ENCODE measurements at regions of chr15 and their contacts with region 1.

Region 1: DNA sequence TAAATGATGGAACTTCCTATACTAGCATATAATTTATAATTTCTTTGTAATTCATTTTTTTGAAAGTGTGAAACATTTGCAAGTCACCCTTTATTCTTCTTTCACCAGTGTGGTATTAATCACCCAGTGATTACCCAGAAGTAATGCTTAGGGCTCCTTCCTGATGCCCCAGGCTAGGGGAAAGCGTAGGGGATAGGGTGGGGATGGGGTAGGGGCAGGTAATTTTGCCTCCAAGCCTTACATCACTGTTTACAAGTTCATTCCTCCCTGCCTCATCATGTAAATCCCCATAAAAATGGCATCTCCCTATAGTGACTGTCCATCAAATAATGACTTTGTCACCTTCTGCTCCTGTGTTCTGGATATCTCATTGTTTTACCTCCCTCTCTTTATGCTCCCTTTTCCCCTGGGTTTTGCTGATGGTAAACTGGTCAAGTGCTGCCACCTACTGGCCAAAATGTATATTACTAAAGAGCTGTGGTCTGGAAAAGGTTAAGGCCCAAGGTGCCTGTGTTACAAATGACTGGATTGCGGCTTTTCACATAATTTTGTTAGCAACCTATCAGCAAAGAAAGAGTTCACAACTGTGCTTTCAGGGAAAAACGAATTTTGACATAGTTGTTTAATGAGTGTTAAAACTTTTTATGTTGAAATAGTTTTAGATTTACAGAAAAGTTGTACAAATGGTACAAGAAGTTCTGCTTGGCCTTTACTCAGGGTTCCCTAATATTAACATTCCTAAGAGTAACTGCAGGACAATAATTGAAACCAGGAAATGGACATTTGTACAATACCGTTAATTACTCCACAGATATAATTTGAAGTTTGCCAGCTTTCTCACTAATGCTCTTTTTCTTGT is 54.7 kb downstream of the ONECUT1 start:
- DNase-seq: peak; percentile 70
- H3K4me3 ChIP-seq: no peak overlapping the region
- H3K27ac ChIP-seq: no peak overlapping the region
- H3K4me1 ChIP-seq: peaks cover 0 to 3% (median 1%) of the 10 kb centered on the region in 4 donors
- H3K27me3 ChIP-seq: no peaks in the 10 kb centered on the region
- CTCF ChIP-seq: peak; percentile 78 to 87 (median 81)
- EP300 ChIP-seq: no peak
- POLR2A ChIP-seq: no peak

Region 2: GRCh38 chr15:52246686-52247431 is 488.6 kb before region 1 on chr15:
- in situ Hi-C with region 1: loop called in 3 of 4 experiments (anchors 10 to 25 kb)
- intact Hi-C with region 1: loop called (anchors 5 kb)
- DNase-seq: no peak
- H3K4me3 ChIP-seq: no peak overlapping the region
- H3K27ac ChIP-seq: no peak overlapping the region
- H3K4me1 ChIP-seq: no peaks in the 10 kb centered on the region
- H3K27me3 ChIP-seq: no peaks in the 10 kb centered on the region
- CTCF ChIP-seq: no peak
- EP300 ChIP-seq: no peak
- POLR2A ChIP-seq: no peak

Region 3: GRCh38 chr15:52256366-52256765 is 479.1 kb before region 1 on chr15:
- in situ Hi-C with region 1: loop called in 3 of 4 experiments (anchors 5 to 25 kb)
- intact Hi-C with region 1: loop called (anchors 5 kb)
- DNase-seq: peak; percentile 79
- H3K4me3 ChIP-seq: no peak overlapping the region
- H3K27ac ChIP-seq: peak overlapping the region in 1 of 4 donors; percentile 7
- H3K4me1 ChIP-seq: peaks cover 0 to 15% (median 8%) of the 10 kb centered on the region in 4 donors
- H3K27me3 ChIP-seq: no peaks in the 10 kb centered on the region
- CTCF ChIP-seq: peak; percentile 71 to 89 (median 84)
- EP300 ChIP-seq: no peak
- POLR2A ChIP-seq: no peak

Region 4: DNA sequence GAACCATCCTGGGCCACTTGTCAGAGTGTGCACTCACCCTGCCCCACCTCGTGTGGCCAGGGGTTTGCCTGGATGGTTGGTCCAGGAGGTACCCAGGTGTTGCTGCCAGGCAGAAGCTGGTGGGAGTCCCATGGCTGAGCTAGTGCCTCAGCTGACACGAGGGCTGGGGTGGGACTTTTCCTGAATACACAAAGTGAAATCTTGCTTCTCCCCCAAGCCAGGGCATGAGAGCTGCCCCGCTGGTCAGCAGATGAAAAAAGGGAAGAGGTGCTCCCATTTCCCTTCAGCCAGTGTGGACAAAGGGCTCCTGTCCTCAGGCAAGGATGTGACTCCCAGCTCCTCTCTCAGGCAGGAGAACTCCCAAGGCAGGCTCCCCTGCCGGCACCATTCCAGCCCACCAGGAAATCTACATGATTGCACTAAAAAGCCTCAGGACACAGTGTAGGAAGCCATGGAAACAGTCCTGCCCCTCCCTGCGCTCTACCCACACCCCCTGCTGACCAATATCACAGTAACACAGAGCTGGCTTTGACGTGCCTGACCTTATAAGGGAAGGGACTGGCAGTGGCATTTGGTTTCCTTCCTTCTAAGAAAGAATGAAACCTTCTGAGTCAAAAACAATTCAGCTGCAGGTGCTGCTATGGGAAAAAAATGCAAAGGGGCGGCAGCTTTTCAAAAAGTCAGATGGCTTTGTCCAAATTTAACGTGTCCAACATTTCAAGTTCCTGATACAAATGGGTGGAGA is 473.8 kb before region 1 on chr15:
- in situ Hi-C with region 1: loop called in 3 of 4 experiments (anchors 5 to 25 kb)
- intact Hi-C with region 1: loop called (anchors 5 kb)
- DNase-seq: peak; percentile 61
- H3K4me3 ChIP-seq: no peak overlapping the region
- H3K27ac ChIP-seq: peak overlapping the region; percentile 14 to 75 (median 34)
- H3K4me1 ChIP-seq: peaks cover 0 to 17% (median 7%) of the 10 kb centered on the region in 4 donors
- H3K27me3 ChIP-seq: no peaks in the 10 kb centered on the region
- CTCF ChIP-seq: peak in 1 of 5 experiments; percentile 16
- EP300 ChIP-seq: no peak
- POLR2A ChIP-seq: no peak

Region 5: DNA sequence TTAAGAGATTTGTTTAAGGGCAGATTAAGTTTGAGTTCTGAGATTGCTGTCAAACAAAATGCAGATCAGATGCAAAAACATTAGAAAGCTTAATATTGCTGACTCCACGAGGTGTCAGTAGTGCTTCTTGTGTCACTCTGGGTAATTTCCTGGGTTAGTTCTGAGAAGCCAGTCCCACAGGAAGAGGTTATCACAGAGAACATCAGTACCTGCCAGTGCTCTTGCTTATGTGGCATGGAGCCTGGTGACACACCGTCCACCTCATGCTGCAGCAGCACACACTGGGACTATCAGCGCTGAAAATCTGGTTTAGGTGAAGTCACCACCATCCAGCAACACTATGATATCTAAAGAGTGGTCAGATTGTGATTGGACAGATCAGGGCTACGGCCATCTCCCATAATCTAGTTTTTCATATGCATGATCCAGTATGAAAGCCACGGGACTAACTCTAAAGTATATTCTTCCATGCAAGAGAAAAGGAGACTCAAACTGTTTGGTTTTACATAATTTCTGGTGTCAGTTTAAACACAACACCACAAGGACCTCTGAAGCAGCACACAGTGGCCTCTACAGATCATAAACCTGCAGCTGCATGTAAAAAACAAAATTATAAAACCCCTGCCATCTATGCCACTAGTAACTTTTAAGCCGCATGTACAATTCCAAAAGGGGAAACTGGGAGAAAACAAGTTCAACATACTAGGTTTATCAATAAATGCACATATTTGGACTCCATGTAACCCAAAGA is 403.8 kb before region 1 on chr15:
- in situ Hi-C with region 1: loop called in 2 of 4 experiments (anchors 25 kb)
- intact Hi-C with region 1: no loop called
- DNase-seq: peak; percentile 23
- H3K4me3 ChIP-seq: no peak overlapping the region
- H3K27ac ChIP-seq: no peak overlapping the region
- H3K4me1 ChIP-seq: no peaks in the 10 kb centered on the region
- H3K27me3 ChIP-seq: no peaks in the 10 kb centered on the region
- CTCF ChIP-seq: peak in 4 of 5 experiments; percentile 20 to 45 (median 38)
- EP300 ChIP-seq: no peak
- POLR2A ChIP-seq: no peak

Region 6: GRCh38 chr15:52370010-52370409 is 365.4 kb before region 1 on chr15:
- in situ Hi-C with region 1: loop called in 1 of 4 experiments (anchors 25 kb)
- intact Hi-C with region 1: no loop called
- DNase-seq: peak; percentile 41
- H3K4me3 ChIP-seq: no peak overlapping the region
- H3K27ac ChIP-seq: no peak overlapping the region
- H3K4me1 ChIP-seq: no peaks in the 10 kb centered on the region
- H3K27me3 ChIP-seq: no peaks in the 10 kb centered on the region
- CTCF ChIP-seq: no peak
- EP300 ChIP-seq: no peak
- POLR2A ChIP-seq: no peak

Region 7: GRCh38 chr15:52615284-52615683 is 120.2 kb before region 1 on chr15:
- in situ Hi-C with region 1: loop called in 1 of 4 experiments (anchors 25 kb)
- intact Hi-C with region 1: no loop called
- DNase-seq: no peak
- H3K4me3 ChIP-seq: no peak overlapping the region
- H3K27ac ChIP-seq: no peak overlapping the region
- H3K4me1 ChIP-seq: no peaks in the 10 kb centered on the region
- H3K27me3 ChIP-seq: no peaks in the 10 kb centered on the region
- CTCF ChIP-seq: no peak
- EP300 ChIP-seq: no peak
- POLR2A ChIP-seq: no peak

Region 8: DNA sequence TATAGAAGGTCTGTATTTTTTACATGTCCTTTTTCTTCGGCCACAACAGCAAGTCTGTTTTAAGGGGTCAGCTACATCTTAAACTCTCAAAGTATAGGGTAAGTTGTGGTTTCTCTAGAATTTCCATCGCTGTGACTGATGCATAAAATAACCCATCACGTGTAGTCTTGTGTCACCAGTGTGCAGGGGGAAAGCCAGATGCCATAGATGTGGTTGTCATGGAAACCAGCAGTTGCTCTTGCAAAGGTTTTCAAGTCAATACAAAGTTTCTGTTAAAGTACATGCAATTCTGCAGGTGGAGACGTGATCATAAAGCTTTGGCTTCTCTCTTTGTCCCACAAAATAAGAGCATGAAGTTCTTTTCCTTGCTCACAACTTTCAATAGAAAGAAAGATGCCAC is 264.9 kb after region 1 on chr15:
- in situ Hi-C with region 1: no loop called
- intact Hi-C with region 1: no loop called
- DNase-seq: no peak
- H3K4me3 ChIP-seq: no peak overlapping the region
- H3K27ac ChIP-seq: no peak overlapping the region
- H3K4me1 ChIP-seq: no peaks in the 10 kb centered on the region
- H3K27me3 ChIP-seq: no peaks in the 10 kb centered on the region
- CTCF ChIP-seq: no peak
- EP300 ChIP-seq: no peak
- POLR2A ChIP-seq: no peak